Aorta (tissue), 5 donors: ENCODE measurements at regions of chr7 and their contacts with region 1.

Region 1: GRCh38 chr7:80392229-80393169 is 119.4 kb downstream of the GNAT3 start:
- DNase-seq: no peak
- ATAC-seq: no peak
- H3K4me3 ChIP-seq: no peak overlapping the region
- H3K27ac ChIP-seq: no peak overlapping the region
- H3K4me1 ChIP-seq: no peaks in the 10 kb centered on the region
- H3K27me3 ChIP-seq: no peaks in the 10 kb centered on the region

Region 2: DNA sequence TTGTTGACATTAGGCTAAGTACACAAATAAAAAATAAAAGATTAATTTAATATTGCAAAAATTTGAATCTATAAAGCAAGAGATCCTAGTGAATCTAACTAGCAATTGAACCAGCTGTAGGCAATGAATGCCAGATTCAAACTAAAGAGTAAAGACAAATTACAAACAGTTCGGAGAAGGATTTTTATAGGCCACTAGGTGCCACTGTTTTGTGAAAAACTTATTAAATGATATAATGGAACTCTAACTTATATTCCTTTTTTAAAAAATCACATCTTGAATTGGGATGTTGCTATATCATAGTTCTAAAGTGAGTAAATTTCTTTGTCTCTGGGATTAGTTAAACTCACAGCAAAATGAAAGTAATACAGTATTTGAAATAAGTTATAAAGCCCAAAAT is 297.0 kb before region 1 on chr7:
- intact Hi-C with region 1: loop called (anchors 5 kb)
- DNase-seq: no peak
- ATAC-seq: no peak
- H3K4me3 ChIP-seq: no peak overlapping the region
- H3K27ac ChIP-seq: no peak overlapping the region
- H3K4me1 ChIP-seq: no peaks in the 10 kb centered on the region
- H3K27me3 ChIP-seq: no peaks in the 10 kb centered on the region

Region 3: GRCh38 chr7:80134536-80135320 is 257.8 kb before region 1 on chr7 and contains the start of gene GNAI1:
- intact Hi-C with region 1: loop called in 1 of 2 experiments (anchors 10 kb)
- DNase-seq: peak; percentile 79 to 93
- ATAC-seq: peak; percentile 89
- H3K4me3 ChIP-seq: peak within 1 kb of the TSS; percentile 84 to 97
- H3K27ac ChIP-seq: peak within 1 kb of the TSS; percentile 48 to 62
- H3K4me1 ChIP-seq: peaks cover 0 to 2% of the 10 kb centered on the region in 2 donors
- H3K27me3 ChIP-seq: no peaks in the 10 kb centered on the region
- total RNA-seq, gene GNAI1: 17.9 to 20.7 TPM